Dorsolateral prefrontal cortex (tissue), 120 donors: ENCODE measurements at regions of chr9 and their contacts with region 1.

Region 1: DNA sequence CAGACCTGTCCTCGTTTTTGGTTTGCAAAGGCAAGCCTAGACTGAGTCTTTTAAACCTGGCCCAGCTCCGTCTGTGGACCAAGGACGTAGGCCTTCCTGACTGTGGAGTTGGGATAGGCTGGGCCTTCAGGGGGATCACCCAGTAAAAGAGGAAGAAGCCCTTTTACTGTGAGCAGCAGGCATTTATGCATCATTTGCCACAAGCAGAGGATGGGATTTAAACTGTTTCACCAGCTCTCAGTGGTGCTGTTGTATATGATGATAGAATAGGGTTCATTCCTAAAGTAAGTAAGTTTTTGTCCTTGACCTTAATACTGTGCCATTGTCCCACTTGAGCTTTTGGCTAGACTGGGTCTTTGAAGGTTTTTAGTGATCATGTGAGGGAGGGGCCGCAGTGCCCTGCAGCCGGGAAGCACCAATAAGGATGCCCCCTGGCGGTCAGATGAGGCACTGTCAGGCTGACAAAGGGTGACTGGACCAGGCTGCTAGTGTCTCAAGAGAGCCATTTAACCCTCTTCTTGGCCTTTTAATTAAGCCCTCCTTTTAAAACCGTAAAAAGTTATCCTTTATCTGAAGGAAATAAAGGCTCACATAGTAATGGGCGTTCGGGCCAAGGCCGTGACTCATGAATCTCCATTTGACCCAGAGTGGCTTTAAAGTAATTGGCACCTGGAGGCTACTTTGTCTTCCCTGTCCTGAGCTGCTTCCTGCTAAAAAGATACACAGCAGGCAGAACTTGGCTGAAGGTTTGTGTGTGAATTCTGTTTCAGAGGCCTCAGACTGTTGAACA is 74.0 kb downstream of the UBAP1 start:
- DNase-seq: peak; percentile 35 to 82 (median 70)
- H3K4me3 ChIP-seq: peak overlapping the region in 2 of 59 donors; percentile 8 to 24
- H3K27ac ChIP-seq: peak overlapping the region in 53 of 59 donors; percentile 7 to 85 (median 63)
- H3K27me3 ChIP-seq: no peaks in the 10 kb centered on the region
- CTCF ChIP-seq: peak in 55 of 56 donors; percentile 61 to 99 (median 91)

Region 2: GRCh38 chr9:33816327-33817252 is 436.3 kb before region 1 on chr9 and contains the start of gene UBE2R2:
- intact Hi-C with region 1: loop called in 1 of 2 experiments (anchors 5 kb)
- DNase-seq: peak; percentile 83 to 96 (median 92)
- H3K4me3 ChIP-seq: peak within 1 kb of the TSS; percentile 67 to 97 (median 89)
- H3K27ac ChIP-seq: peak within 1 kb of the TSS; percentile 90 to 100 (median 99)
- H3K27me3 ChIP-seq: no peaks in the 10 kb centered on the region
- CTCF ChIP-seq: peak in 35 of 56 donors; percentile 7 to 56 (median 25)
- total RNA-seq, gene UBE2R2: 31.7 to 50.3 (median 42.2) TPM

Region 3: DNA sequence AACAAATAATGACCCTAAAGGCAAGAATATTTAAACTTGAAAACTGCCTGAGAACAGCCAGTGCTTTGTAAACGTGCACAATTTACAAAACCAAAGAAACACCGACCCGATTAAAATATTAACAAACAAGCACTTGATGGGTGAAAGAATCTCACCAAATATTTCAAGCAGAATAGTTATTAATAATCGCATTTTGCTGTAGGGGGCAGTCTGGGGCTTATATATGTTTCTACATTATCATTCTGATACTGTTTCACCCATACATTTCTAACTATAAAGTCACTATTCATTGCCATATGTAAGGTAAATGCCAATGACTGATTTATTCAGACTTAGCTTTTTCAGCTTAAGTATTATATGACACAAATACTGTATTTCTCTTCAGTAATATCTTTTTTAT is 241.9 kb before region 1 on chr9:
- intact Hi-C with region 1: loop called in 1 of 2 experiments (anchors 10 kb)
- DNase-seq: no peak
- H3K4me3 ChIP-seq: no peak overlapping the region
- H3K27ac ChIP-seq: no peak overlapping the region
- H3K27me3 ChIP-seq: no peaks in the 10 kb centered on the region
- CTCF ChIP-seq: peak in 45 of 56 donors; percentile 8 to 65 (median 34)

Region 4: GRCh38 chr9:34126207-34127034 is 126.4 kb before region 1 on chr9 and contains the start of gene DCAF12:
- intact Hi-C with region 1: loop called (anchors 5 kb)
- DNase-seq: peak; percentile 76 to 91 (median 87)
- H3K4me3 ChIP-seq: peak within 1 kb of the TSS; percentile 58 to 100 (median 93)
- H3K27ac ChIP-seq: peak within 1 kb of the TSS; percentile 64 to 98 (median 91)
- H3K27me3 ChIP-seq: no peaks in the 10 kb centered on the region
- CTCF ChIP-seq: peak in 38 of 56 donors; percentile 7 to 56 (median 28)
- total RNA-seq, gene DCAF12: 13.2 to 29.5 (median 19.8) TPM

Region 5: DNA sequence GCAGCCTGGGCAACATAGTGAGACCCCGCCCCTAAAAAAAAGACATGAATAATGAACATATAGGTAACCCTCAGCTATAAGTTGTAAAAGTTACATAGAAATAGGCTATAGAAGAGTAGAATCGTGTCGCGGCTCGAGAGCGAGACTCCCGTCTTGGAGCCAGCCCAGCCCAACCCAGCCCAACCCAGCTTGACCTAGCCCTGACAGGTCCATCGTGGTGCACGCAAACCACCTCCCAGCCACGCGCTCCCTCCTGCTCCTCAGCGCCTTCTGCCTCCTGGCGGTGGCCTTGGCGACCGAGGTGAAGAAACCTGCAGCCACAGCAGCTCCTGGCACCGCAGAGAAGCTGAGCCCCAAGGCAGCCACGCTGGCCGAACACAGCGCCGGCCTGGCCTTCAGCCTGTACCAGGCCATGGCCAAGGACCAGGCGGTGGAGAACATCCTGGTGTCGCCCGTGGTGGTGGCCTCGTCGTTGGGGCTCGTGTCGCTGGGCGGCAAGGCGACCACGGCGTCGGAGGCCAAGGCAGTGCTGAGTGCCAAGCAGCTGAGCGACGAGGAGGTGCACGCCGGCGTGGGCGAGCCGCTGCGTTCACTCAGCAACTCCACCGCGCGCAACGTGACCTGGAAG is 65.4 kb after region 1 on chr9:
- intact Hi-C with region 1: no loop called
- DNase-seq: no peak
- H3K4me3 ChIP-seq: no peak overlapping the region
- H3K27ac ChIP-seq: no peak overlapping the region
- H3K27me3 ChIP-seq: no peaks in the 10 kb centered on the region
- CTCF ChIP-seq: no peak

Region 6: DNA sequence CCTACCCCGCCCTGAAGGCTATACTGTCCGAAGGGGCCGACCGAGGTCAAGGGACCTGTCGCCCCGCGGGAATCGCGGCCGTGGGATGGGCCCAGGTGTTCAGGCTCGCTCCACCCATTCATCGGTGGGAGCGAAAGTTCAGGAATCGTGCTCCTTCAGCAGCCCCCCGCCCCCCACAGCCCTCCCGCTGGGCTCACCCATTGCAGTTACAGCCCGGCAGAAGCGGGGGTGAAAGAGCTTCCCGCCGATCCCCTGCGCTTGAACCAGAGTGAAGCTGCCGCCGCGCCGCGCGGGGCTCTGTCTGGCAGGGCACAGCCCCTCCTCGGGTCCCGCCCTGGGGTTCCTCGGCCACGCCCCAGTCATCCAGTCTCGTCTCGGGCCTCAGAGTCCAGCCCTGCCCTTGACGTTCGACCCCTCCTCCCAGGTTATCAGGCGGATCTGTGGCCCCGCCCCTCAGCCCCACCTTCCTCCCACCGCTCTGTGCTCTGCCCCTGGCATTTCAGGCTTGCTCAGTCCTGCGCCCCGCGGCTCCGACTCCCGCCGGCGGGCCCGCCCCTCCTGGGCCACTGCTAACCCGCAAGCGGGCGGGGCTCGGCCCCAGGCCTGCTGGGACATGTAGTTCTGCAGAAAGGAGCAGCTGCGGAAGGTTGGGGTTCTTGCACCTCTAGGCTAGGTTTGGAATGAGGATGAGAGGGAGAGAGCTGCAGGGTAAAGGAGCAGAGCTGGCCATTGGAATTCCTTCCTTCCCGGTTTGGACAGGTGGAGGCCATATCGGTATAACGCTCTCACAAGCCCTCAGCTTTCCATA is 123.9 kb after region 1 on chr9 and contains the start of gene MYORG:
- intact Hi-C with region 1: loop called in 1 of 2 experiments (anchors 10 kb)
- DNase-seq: peak; percentile 82 to 95 (median 93)
- H3K4me3 ChIP-seq: peak within 1 kb of the TSS; percentile 57 to 91 (median 80)
- H3K27ac ChIP-seq: peak within 1 kb of the TSS; percentile 26 to 92 (median 83)
- H3K27me3 ChIP-seq: no peaks in the 10 kb centered on the region
- CTCF ChIP-seq: peak in 20 of 56 donors; percentile 6 to 47 (median 18)
- total RNA-seq, gene MYORG: 13.4 to 79.3 (median 30.2) TPM